Cardiac septum (tissue), 1 donor: ENCODE measurements at regions of chr16 and their contacts with region 1.

Region 1: DNA sequence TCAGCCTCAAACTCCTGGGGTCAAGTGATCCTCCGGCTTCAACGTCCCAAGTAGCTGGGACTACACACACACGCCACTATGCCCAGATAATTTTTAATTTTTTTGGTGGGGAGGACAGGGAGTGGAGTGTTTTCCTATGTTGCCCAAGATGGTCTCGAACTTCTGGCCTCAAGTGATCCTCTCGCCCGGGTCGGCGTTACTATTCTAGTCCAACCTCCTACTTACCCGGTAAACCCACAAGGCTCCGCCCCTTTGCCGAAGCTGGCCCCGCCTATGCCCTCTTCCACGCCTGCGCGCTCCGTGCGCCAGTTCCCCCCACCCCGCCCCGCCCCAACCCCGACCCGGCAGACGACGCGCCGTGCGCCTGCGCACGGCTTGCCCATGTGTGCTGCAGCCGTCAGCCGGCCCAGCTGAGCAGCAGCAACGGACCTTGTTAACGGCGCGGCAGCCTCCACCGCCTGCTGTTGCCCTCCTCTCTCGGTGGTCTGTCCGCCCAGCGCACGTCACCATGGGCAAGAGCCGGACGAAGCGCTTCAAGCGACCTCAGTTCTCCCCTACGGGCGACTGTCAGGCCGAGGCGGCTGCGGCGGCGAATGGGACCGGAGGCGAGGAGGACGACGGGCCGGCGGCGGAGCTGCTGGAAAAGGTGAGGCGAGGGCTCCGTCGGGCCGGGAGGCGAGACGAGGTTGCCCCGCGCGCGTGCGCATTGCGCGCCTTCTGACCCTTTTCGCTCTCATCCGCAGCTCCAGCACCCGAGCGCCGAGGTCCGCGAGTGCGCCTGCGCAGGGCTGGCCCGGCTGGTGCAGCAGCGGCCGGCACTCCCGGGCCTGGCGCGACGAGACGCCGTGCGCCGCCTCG is at the start of gene HEATR3:
- DNase-seq: peak; percentile 98
- total RNA-seq, gene HEATR3: 10.3 TPM

Region 2: DNA sequence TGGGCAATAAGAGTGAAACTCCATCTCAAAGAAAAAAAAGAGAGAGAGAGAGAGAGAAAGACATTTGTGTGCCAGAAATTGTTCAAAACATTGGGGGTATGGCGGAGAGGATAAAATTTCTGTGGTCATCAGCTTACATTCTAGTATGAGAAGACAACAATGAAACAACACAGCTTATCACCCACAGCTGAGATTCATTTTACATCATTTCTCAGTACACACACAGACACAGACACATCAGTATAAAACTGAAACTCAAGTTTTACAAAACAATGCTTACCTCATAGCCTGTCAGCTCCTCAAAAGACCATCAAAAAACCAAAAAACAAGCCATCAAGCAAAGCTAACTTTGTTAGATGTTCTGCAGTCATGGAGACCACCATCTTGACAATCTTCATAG is 72.3 kb before region 1 on chr16:
- intact Hi-C with region 1: no loop called
- DNase-seq: no peak

Region 3: GRCh38 chr16:50050802-50051201 is 15.1 kb before region 1 on chr16:
- intact Hi-C with region 1: no loop called
- DNase-seq: no peak

Region 4: GRCh38 chr16:50152807-50153452 is 87.1 kb after region 1 on chr16 and contains the start of gene TENT4B:
- intact Hi-C with region 1: loop called (anchors 2 kb)
- DNase-seq: peak; percentile 95
- total RNA-seq, gene TENT4B: 9.1 TPM